ENCODE measurements at regions of chr22 and their contacts with region 1.

Region 1: DNA sequence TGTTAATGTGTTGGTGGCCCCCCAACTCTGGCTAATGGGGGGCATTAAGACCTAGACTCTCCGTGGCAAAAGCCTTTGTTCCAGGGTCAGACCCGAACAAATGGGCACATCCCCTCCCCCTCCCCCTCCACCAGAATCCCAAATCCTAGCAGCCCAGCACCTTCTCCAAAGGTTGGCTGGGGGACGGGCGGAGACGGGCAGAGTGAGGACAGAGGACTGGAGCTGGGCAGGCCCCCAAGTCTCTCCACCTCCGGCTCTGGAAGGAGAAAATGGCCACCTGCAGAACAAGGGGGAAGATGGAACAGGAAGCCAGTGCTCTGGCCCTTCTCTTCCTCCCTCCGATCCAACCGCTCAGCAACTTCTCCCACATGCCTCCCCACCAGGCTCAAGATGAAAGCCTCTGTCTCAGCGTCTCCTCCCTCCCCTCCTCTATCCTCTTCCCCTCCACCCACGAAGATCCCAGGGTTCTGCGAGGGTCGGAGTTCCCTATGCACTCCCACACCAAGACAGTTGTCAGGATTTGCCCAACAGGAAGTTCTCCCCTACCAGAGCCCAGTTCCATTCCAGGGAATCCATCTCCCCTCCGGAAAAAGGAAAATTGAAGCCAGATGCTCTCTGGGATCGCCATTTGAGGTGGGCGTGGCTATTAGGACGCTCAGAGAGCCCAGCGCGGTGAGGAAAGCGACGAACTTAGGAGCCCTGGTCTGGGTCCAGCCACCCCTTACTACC is 20.1 kb downstream of the ADA2 start:
- DNase-seq: no peak
- H3K4me3 ChIP-seq: peak overlapping the region in 2 of 4 donors; percentile 14 to 34
- H3K27ac ChIP-seq: peak overlapping the region in 2 of 4 donors; percentile 17 to 58
- H3K4me1 ChIP-seq: no peaks in the 10 kb centered on the region
- H3K27me3 ChIP-seq: no peaks in the 10 kb centered on the region
- CTCF ChIP-seq: no peak
- EP300 ChIP-seq: no peak
- POLR2A ChIP-seq: no peak

Region 2: DNA sequence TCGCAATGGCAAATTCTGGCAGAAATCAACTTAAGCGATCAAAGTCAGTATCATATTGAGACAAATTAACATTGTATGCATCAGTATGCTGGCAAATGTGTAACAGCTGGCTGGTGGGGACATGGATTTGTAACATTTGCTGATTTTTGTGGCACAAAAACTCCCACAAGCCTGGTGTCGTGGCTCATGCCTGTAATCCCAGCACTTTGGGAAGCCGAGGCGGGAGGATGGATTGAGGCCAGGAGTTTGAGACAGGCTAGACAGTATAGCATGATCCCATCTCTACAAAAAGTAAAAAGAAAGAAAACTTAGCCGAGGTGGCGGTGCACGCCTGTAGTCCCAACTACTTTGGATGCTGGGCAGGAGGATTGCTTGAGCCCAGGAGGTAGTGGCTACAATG is 22.5 kb before region 1 on chr22:
- in situ Hi-C with region 1: no loop called
- intact Hi-C with region 1: no loop called
- DNase-seq: no peak
- H3K4me3 ChIP-seq: no peak overlapping the region
- H3K27ac ChIP-seq: no peak overlapping the region
- H3K4me1 ChIP-seq: peaks cover 0 to 9% (median 6%) of the 10 kb centered on the region in 4 donors
- H3K27me3 ChIP-seq: no peaks in the 10 kb centered on the region
- CTCF ChIP-seq: no peak
- EP300 ChIP-seq: no peak
- POLR2A ChIP-seq: no peak

Region 3: GRCh38 chr22:17477391-17477833 is 278.2 kb after region 1 on chr22:
- in situ Hi-C with region 1: loop called in 2 of 4 experiments (anchors 25 kb)
- intact Hi-C with region 1: no loop called
- DNase-seq: no peak
- H3K4me3 ChIP-seq: no peak overlapping the region
- H3K27ac ChIP-seq: no peak overlapping the region
- H3K4me1 ChIP-seq: no peaks in the 10 kb centered on the region
- H3K27me3 ChIP-seq: peaks cover 4% of the 10 kb centered on the region
- CTCF ChIP-seq: no peak
- EP300 ChIP-seq: no peak
- POLR2A ChIP-seq: no peak